CD8-positive, alpha-beta T cell (primary cell): ENCODE measurements at regions of chr15 and their contacts with region 1.

Region 1: GRCh38 chr15:42273102-42273899 is at the starts of genes GANC and TMEM87A:
- DNase-seq: peak; percentile 91 to 99 (median 95)
- ATAC-seq: peak; percentile 90
- H3K4me3 ChIP-seq: peak within 1 kb of the TSS; percentile 90 to 93
- H3K4me3 Mint-ChIP-seq: peak within 1 kb of the TSS; percentile 99
- H3K27ac ChIP-seq: peak within 1 kb of the TSS; percentile 95 to 96
- H3K27ac Mint-ChIP-seq: peak within 1 kb of the TSS; percentile 100
- H3K4me1 ChIP-seq: peaks cover 38% of the 10 kb centered on the region
- H3K4me1 Mint-ChIP-seq: peaks cover 61% of the 10 kb centered on the region
- H3K27me3 ChIP-seq: no peaks in the 10 kb centered on the region
- H3K27me3 Mint-ChIP-seq: no peaks in the 10 kb centered on the region
- CTCF ChIP-seq: no peak
- total RNA-seq, gene GANC: 15.5 to 19.3 TPM
- total RNA-seq, gene TMEM87A: 71.0 to 74.5 TPM

Region 2: GRCh38 chr15:40694688-40695468 is 1578.4 kb before region 1 on chr15 and contains the start of gene RAD51:
- CTCF ChIA-PET with region 1: no interaction called
- POLR2A ChIA-PET with region 1: no interaction called
- intact Hi-C with region 1: loop called in 1 of 2 experiments (anchors 10 kb)
- DNase-seq: peak; percentile 82 to 96 (median 94)
- ATAC-seq: peak; percentile 94
- H3K4me3 ChIP-seq: peak within 1 kb of the TSS; percentile 84 to 94
- H3K4me3 Mint-ChIP-seq: peak within 1 kb of the TSS; percentile 99
- H3K27ac ChIP-seq: peak within 1 kb of the TSS; percentile 83 to 98
- H3K27ac Mint-ChIP-seq: peak within 1 kb of the TSS; percentile 99
- H3K4me1 ChIP-seq: peaks cover 12% of the 10 kb centered on the region
- H3K4me1 Mint-ChIP-seq: peaks cover 27% of the 10 kb centered on the region
- H3K27me3 ChIP-seq: no peaks in the 10 kb centered on the region
- H3K27me3 Mint-ChIP-seq: no peaks in the 10 kb centered on the region
- CTCF ChIP-seq: no peak
- total RNA-seq, gene RAD51: 1.3 to 1.5 TPM

Region 3: DNA sequence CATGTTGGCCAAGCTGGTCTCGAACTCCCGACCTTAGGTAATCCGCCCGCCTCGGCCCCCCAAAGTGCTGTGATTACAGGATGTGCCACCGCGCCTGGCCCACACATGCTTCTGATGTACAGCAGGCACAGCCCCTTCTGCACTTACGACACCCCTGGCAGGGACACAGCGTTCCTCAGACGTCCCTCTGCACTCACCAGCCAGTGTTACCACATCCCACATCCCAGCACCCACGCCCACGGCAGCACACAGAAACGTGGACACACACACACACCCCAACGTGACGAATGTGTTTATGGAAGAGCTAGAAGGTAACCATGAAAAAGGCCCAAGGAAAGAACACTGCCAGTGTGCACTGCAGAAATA is 728.7 kb before region 1 on chr15:
- CTCF ChIA-PET with region 1: no interaction called
- POLR2A ChIA-PET with region 1: no interaction called
- intact Hi-C with region 1: loop called (anchors 2 to 10 kb)
- DNase-seq: peak in 7 of 9 experiments; percentile 16 to 61 (median 55)
- ATAC-seq: peak; percentile 30
- H3K4me3 ChIP-seq: peak overlapping the region; percentile 88 to 95
- H3K4me3 Mint-ChIP-seq: peak overlapping the region; percentile 91
- H3K27ac ChIP-seq: peak overlapping the region in 1 of 2 experiments; percentile 64
- H3K27ac Mint-ChIP-seq: peak overlapping the region; percentile 95
- H3K4me1 ChIP-seq: peaks cover 8% of the 10 kb centered on the region
- H3K4me1 Mint-ChIP-seq: peaks cover 18% of the 10 kb centered on the region
- H3K27me3 ChIP-seq: no peaks in the 10 kb centered on the region
- H3K27me3 Mint-ChIP-seq: no peaks in the 10 kb centered on the region
- CTCF ChIP-seq: no peak

Region 4: GRCh38 chr15:41972253-41973242 is 300.8 kb before region 1 on chr15 and contains the start of gene EHD4:
- CTCF ChIA-PET with region 1: no interaction called
- POLR2A ChIA-PET with region 1: no interaction called
- intact Hi-C with region 1: loop called in 1 of 2 experiments (anchors 5 kb)
- DNase-seq: peak; percentile 85 to 98 (median 94)
- ATAC-seq: peak; percentile 81
- H3K4me3 ChIP-seq: peak within 1 kb of the TSS; percentile 69 to 77
- H3K4me3 Mint-ChIP-seq: peak within 1 kb of the TSS; percentile 97
- H3K27ac ChIP-seq: peak within 1 kb of the TSS; percentile 83 to 86
- H3K27ac Mint-ChIP-seq: peak within 1 kb of the TSS; percentile 97
- H3K4me1 ChIP-seq: peaks cover 21% of the 10 kb centered on the region
- H3K4me1 Mint-ChIP-seq: peaks cover 44% of the 10 kb centered on the region
- H3K27me3 ChIP-seq: peaks cover 0 to 4% of the 10 kb centered on the region in 2 experiments
- H3K27me3 Mint-ChIP-seq: peaks cover 5% of the 10 kb centered on the region
- CTCF ChIP-seq: no peak
- total RNA-seq, gene EHD4: 36.4 to 40.5 TPM

Region 5: GRCh38 chr15:42495361-42496212 is 222.3 kb after region 1 on chr15 and contains the start of gene SNAP23:
- CTCF ChIA-PET with region 1: no interaction called
- POLR2A ChIA-PET with region 1: interaction called, 4 read pairs
- intact Hi-C with region 1: loop called (anchors 1 to 5 kb)
- DNase-seq: peak; percentile 49 to 91 (median 84)
- ATAC-seq: peak; percentile 90
- H3K4me3 ChIP-seq: peak within 1 kb of the TSS; percentile 82 to 90
- H3K4me3 Mint-ChIP-seq: peak within 1 kb of the TSS; percentile 97
- H3K27ac ChIP-seq: peak within 1 kb of the TSS; percentile 60 to 71
- H3K27ac Mint-ChIP-seq: peak within 1 kb of the TSS; percentile 97
- H3K4me1 ChIP-seq: peaks cover 41% of the 10 kb centered on the region
- H3K4me1 Mint-ChIP-seq: peaks cover 76% of the 10 kb centered on the region
- H3K27me3 ChIP-seq: no peaks in the 10 kb centered on the region
- H3K27me3 Mint-ChIP-seq: no peaks in the 10 kb centered on the region
- CTCF ChIP-seq: no peak
- total RNA-seq, gene SNAP23: 30.9 to 39.9 TPM

Region 6: DNA sequence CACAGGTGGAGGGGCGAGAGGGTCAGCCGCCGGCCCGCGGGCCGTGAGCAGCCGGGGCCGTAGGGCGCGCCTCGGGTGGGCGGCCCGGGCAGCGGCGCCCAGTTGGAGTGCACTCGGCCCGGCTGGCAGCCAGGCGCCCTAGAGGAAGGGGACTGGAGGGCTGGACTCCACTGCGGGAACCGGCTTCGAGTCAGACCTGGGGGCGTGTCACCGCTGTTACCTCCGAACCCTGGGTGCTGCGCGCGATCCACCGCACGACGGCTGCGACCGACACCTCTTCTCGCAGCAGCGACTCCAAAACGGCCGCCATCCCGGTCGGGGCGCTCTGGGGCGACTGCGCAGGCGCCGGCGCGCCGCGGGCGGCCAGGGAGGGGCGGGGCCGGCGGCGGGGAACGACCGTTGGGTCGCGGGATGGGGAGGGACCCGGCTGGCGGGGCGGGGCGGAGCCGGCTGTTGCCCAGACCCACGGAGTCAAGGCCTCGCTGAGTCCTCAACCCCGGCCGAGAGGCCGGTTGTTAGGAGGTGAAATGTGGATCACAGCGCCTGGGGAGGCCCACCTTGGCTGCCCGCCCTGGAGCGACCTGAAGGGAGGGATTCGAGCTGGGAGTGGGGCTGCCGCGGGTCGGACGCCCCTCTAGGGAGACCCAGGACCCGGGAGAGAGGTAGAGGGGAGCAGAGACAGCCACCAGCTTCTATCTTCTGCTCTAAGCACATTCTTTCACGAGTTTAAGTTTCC is 463.7 kb after region 1 on chr15 and contains the start of gene CDAN1:
- CTCF ChIA-PET with region 1: no interaction called
- POLR2A ChIA-PET with region 1: no interaction called
- intact Hi-C with region 1: loop called (anchors 2 to 10 kb)
- DNase-seq: peak; percentile 88 to 97 (median 93)
- ATAC-seq: peak; percentile 93
- H3K4me3 ChIP-seq: peak within 1 kb of the TSS; percentile 62 to 78
- H3K4me3 Mint-ChIP-seq: peak within 1 kb of the TSS; percentile 80
- H3K27ac ChIP-seq: peak within 1 kb of the TSS; percentile 72 to 80
- H3K27ac Mint-ChIP-seq: peak within 1 kb of the TSS; percentile 78
- H3K4me1 ChIP-seq: peaks cover 14% of the 10 kb centered on the region
- H3K4me1 Mint-ChIP-seq: peaks cover 22% of the 10 kb centered on the region
- H3K27me3 ChIP-seq: no peaks in the 10 kb centered on the region
- H3K27me3 Mint-ChIP-seq: no peaks in the 10 kb centered on the region
- CTCF ChIP-seq: no peak
- total RNA-seq, gene CDAN1: 23.9 to 24.0 TPM

Region 7: DNA sequence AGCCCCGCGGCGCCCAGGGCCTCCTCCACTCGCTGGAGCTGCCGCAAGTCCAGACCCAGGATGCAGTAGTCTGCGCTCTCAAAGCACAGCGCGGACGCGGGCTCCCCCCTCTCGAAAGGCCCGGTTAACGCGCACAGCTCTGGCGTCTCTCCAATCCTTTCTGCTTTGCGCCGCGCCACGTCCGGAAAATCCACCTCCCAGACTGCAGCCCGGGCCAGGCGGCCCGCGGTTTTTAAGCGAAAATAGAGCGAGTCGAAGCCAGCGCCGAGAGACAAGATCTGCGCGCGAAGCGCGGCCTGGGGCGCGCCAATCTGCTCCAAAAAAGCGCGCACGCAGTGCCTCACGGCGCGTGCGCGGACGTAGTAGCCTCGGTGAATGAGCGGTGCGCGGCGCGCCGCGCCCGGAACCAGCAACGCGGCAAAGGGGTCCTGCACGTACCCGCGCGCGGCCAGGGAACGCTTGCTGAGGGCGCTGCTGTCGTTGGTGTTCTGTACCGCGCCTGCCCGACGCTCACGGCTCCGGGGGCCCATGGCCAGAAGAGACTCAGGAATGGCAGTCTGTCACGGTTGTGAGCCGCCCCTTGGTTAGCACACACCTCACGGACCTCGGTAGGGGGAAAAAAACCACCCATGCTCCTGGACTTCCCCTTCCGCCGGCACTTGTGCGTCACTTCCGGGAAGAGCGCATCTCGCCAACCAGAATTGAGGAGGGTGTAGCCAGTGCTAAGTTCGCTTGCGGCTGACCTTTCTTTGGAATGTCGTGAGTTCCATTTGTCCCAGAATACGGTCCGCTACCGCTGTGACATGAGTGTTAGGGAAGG is 1056.9 kb after region 1 on chr15 and contains the start of gene LCMT2:
- CTCF ChIA-PET with region 1: no interaction called
- POLR2A ChIA-PET with region 1: no interaction called
- intact Hi-C with region 1: loop called in 1 of 2 experiments (anchors 5 kb)
- DNase-seq: peak; percentile 80 to 98 (median 91)
- ATAC-seq: peak; percentile 85
- H3K4me3 ChIP-seq: peak within 1 kb of the TSS; percentile 74 to 84
- H3K4me3 Mint-ChIP-seq: peak within 1 kb of the TSS; percentile 98
- H3K27ac ChIP-seq: peak within 1 kb of the TSS; percentile 89 to 96
- H3K27ac Mint-ChIP-seq: peak within 1 kb of the TSS; percentile 100
- H3K4me1 ChIP-seq: peaks cover 23% of the 10 kb centered on the region
- H3K4me1 Mint-ChIP-seq: peaks cover 42% of the 10 kb centered on the region
- H3K27me3 ChIP-seq: no peaks in the 10 kb centered on the region
- H3K27me3 Mint-ChIP-seq: no peaks in the 10 kb centered on the region
- CTCF ChIP-seq: no peak
- total RNA-seq, gene LCMT2: 7.0 to 7.6 TPM